Activated CD4-positive, alpha-beta memory T cell treated with anti-CD3 and anti-CD28 coated beads, Interleukin-2, amount 10 ng/mL, durations not matched to agents 7 days and 5 days (primary cell): ENCODE measurements at regions of chr9 and their contacts with region 1.

Region 1: GRCh38 chr9:33024966-33025571 is at the start of gene DNAJA1:
- DNase-seq: peak; percentile 95
- H3K4me3 Mint-ChIP-seq: peak within 1 kb of the TSS; percentile 96
- H3K27ac Mint-ChIP-seq: peak within 1 kb of the TSS; percentile 92
- H3K4me1 Mint-ChIP-seq: peaks cover 71% of the 10 kb centered on the region
- H3K27me3 Mint-ChIP-seq: no peaks in the 10 kb centered on the region
- total RNA-seq, gene DNAJA1: 141 to 142 TPM

Region 2: DNA sequence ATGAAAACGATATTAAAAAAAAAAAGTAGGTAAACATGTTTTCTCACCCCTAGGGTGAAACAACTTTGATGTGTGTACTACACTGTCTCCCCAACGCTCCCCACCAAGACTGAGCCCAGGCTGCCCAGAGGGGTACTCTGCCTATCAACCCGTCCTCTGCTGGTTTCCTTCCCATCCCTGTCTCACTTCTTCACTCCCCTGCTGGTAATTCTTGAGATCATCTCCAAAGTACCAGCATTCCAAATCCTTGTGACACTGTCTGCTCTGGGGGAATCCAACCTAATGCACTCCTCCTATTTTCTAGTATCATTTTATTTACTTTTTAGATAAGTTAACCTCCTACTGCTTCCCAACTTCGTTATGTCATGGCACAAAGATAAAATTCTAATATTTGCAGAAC is 17.3 kb before region 1 on chr9:
- CTCF ChIA-PET with region 1: interaction called, 4 read pairs
- POLR2A ChIA-PET with region 1: interaction called, 102 read pairs
- DNase-seq: no peak
- H3K4me3 Mint-ChIP-seq: no peak overlapping the region
- H3K27ac Mint-ChIP-seq: no peak overlapping the region
- H3K4me1 Mint-ChIP-seq: peaks cover under 1% of the 10 kb centered on the region
- H3K27me3 Mint-ChIP-seq: no peaks in the 10 kb centered on the region

Region 3: DNA sequence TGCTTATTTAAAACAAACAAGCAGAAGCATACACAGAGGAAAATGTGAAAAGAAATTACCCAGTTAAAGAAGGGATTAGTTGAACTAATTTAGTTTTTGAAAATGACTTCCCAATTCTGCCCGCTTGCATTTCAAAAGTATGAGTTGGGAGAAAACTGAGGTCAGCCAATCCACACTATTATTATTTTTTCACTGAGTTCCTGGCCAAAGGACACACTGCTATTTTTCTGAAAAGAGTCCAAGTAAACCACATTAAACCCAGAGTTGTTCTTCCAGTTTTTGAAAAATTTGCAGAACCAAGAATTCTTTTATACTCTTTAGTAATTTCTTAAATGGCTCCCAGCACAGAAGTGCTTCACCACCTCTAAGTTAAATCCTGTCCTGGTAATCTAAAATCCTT is 43.9 kb after region 1 on chr9:
- CTCF ChIA-PET with region 1: no interaction called
- POLR2A ChIA-PET with region 1: interaction called, 20 read pairs
- DNase-seq: no peak
- H3K4me3 Mint-ChIP-seq: no peak overlapping the region
- H3K27ac Mint-ChIP-seq: no peak overlapping the region
- H3K4me1 Mint-ChIP-seq: peaks cover 38% of the 10 kb centered on the region
- H3K27me3 Mint-ChIP-seq: no peaks in the 10 kb centered on the region

Region 4: GRCh38 chr9:33159760-33160127 is 134.7 kb after region 1 on chr9:
- CTCF ChIA-PET with region 1: no interaction called
- POLR2A ChIA-PET with region 1: interaction called, 10 read pairs
- DNase-seq: peak; percentile 69
- H3K4me3 Mint-ChIP-seq: peak overlapping the region; percentile 63
- H3K27ac Mint-ChIP-seq: peak overlapping the region; percentile 91
- H3K4me1 Mint-ChIP-seq: peaks cover 93% of the 10 kb centered on the region
- H3K27me3 Mint-ChIP-seq: no peaks in the 10 kb centered on the region

Region 5: GRCh38 chr9:33225319-33226149 is 200.5 kb after region 1 on chr9:
- CTCF ChIA-PET with region 1: interaction called, 6 read pairs
- POLR2A ChIA-PET with region 1: interaction called, 10 read pairs
- DNase-seq: peak; percentile 79
- H3K4me3 Mint-ChIP-seq: no peak overlapping the region
- H3K27ac Mint-ChIP-seq: peak overlapping the region; percentile 24
- H3K4me1 Mint-ChIP-seq: peaks cover 36% of the 10 kb centered on the region
- H3K27me3 Mint-ChIP-seq: no peaks in the 10 kb centered on the region